Common myeloid progenitor, CD34-positive (primary cell): ENCODE measurements at regions of chr13 and their contacts with region 1.

Region 1: DNA sequence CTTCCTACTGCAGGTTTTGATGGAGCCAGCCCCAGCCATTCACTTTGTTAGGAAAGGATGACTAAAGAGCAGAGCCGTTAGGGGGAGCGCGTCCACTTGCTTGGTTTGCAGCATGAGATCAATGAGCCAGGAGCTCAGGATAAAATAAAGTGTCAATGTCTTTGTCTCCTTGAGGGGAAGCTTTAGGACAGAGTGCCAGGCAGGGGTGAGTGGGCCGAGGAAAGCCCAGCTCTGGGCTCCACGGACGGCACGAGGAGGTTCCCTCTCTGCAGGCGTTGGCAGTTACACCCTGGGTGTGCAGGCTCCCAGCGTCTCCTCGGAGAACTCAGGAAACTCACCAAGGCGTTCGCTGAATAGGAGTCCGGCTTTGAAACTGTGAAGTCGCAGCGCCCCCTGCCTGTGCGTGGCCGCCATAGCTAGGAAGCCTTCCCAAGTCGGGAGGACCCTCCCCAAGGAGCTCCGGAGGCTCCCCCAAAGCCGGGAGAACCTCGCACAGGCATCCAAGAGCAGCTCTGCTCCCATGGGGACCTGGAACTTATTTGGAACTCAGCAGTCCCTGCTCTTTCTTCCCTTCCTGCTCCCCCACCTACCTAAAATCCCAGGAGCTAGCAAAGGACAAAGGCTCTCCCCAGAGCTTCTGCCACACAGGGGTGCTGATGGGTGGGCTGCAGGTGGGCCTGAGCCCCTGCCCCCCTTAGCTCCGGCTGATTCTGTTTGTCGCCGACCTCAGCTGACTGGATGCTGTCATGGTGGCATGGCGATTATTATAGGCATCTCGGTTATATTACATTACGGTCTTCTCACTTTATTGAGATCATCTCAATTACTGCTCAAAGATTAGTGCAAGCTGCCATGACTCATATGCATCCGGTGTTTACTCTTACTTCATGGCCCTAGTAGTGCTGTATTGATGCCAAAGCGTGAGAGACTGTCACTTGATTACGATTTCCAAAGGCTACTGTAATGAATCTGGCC is 34.4 kb downstream of the GSX1 start:
- DNase-seq: peak; percentile 80 to 84 (median 83)
- H3K4me3 ChIP-seq: peak overlapping the region in 6 of 7 experiments; percentile 20 to 71 (median 46)
- H3K27ac ChIP-seq: no peak overlapping the region
- H3K4me1 ChIP-seq: peaks cover 0 to 13% (median 5%) of the 10 kb centered on the region in 4 experiments
- H3K27me3 ChIP-seq: peaks cover 8 to 78% (median 43%) of the 10 kb centered on the region in 5 experiments

Region 2: GRCh38 chr13:26985285-26985878 is 841.3 kb before region 1 on chr13:
- CTCF ChIA-PET with region 1: interaction called, 18 read pairs
- POLR2A ChIA-PET with region 1: interaction called, 4 read pairs
- DNase-seq: peak; percentile 81 to 91 (median 87)
- H3K4me3 ChIP-seq: no peak overlapping the region
- H3K27ac ChIP-seq: no peak overlapping the region
- H3K4me1 ChIP-seq: peaks cover 16 to 48% (median 31%) of the 10 kb centered on the region in 4 experiments
- H3K27me3 ChIP-seq: no peaks in the 10 kb centered on the region

Region 3: GRCh38 chr13:27374650-27375049 is 452.0 kb before region 1 on chr13:
- CTCF ChIA-PET with region 1: interaction called, 126 read pairs
- POLR2A ChIA-PET with region 1: no interaction called
- DNase-seq: peak; percentile 83 to 89 (median 85)
- H3K4me3 ChIP-seq: no peak overlapping the region
- H3K27ac ChIP-seq: no peak overlapping the region
- H3K4me1 ChIP-seq: peaks cover 0 to 1% (median 0%) of the 10 kb centered on the region in 4 experiments
- H3K27me3 ChIP-seq: peaks cover 0 to 15% (median 11%) of the 10 kb centered on the region in 5 experiments

Region 4: DNA sequence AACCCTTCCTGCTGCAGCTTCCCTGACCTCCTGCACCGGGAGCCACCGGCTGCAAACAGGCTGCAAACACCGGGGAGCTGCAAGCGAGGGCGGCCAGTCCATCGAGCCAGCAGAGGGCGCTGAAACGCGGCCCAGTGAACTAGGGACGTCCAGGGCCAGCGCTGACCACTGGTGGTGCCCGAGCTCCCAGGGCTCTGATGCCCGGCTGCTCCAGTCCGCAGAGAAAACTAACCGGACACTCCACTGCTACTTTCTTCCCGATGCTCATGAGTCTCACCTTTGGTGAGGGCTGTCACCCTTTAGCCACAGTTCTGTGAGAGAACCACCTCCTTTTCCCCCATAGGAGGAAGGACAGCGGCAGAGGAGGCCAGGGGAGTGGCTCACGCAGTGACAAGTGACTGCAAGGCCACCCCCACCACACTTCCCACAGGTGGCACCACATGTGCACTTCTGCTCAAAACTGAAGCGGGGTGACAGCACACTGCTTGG is 293.5 kb before region 1 on chr13:
- CTCF ChIA-PET with region 1: interaction called, 16 read pairs
- POLR2A ChIA-PET with region 1: no interaction called
- DNase-seq: peak; percentile 44 to 76 (median 67)
- H3K4me3 ChIP-seq: peak overlapping the region in 5 of 7 experiments; percentile 15 to 62 (median 43)
- H3K27ac ChIP-seq: no peak overlapping the region
- H3K4me1 ChIP-seq: peaks cover 0 to 9% (median 8%) of the 10 kb centered on the region in 4 experiments
- H3K27me3 ChIP-seq: peaks cover 0 to 2% (median 0%) of the 10 kb centered on the region in 5 experiments

Region 5: DNA sequence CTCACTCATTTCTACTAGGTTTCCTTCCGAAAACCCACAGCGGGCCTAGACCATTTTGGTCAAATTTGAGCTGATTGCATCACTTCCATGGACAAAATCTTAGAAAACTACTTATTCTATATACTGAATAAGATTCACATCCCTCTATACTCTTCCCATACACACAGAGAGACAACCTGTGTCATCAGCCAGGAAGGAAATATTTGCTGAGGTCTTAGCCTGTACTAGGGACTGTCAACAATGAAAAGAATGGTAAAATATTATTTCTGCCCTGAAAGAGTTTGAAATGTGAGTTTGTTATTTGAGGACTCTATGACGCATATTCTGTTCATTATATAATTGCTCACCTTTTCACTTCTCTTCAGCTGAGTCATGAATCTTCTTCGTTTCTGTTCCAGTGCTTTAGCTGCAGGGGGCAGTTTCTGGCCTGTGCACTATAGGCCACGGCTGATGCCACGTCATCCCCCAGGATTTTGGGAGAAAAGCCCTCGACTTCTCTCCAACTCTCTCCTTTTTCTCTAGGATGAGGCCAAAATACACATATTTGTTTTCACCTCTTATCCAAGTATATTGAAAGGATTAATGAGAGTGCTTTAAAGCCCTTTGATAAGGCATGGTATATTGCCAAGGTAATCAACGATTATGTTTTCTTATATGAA is 13.3 kb after region 1 on chr13:
- CTCF ChIA-PET with region 1: interaction called, 57 read pairs
- POLR2A ChIA-PET with region 1: interaction called, 5 read pairs
- DNase-seq: no peak
- H3K4me3 ChIP-seq: no peak overlapping the region
- H3K27ac ChIP-seq: no peak overlapping the region
- H3K4me1 ChIP-seq: no peaks in the 10 kb centered on the region
- H3K27me3 ChIP-seq: peaks cover 4 to 53% (median 10%) of the 10 kb centered on the region in 5 experiments

Region 6: DNA sequence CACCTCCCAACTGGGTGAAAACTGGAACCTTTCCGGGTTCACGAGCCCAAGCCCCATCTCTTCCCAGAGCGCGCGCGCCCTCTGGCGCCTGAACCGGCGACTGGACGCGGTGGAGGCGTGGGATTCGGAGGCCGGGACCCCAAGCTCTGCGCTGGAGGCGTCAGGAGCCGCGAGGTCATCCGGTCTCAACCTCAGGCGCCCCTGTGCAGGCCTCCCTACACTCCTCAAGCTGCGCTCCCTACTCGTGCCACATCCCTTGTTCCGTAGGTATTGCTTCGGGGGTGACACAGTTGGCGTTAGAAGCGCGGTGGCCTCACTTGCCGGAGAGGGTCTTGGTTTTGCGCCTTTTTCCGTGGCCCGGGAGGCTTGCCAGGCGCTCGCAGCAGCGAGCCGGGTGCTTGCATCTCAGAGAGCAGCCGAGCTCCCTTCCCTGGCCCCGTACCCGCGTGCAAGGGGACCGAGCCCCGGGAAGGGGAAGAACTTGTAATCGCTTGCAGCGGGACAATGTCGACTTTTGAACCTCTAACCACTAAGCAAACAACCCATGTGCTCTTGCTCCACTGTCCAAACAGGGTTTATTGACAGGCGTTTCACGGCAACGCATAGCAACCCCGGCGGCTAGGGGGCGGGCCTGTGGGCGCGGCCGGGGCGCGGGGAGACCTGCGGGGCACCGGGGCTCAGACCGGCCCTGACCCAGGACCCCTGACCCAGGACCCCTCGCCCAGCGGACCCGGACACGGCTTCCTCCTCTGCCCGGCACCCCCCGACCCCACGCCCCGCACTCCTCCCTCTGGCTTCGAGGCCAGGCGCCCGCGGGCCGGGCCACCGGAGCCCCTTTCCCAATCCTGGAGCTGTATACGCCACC is 133.9 kb after region 1 on chr13:
- CTCF ChIA-PET with region 1: interaction called, 65 read pairs
- POLR2A ChIA-PET with region 1: no interaction called
- DNase-seq: peak; percentile 50 to 83 (median 76)
- H3K4me3 ChIP-seq: peak overlapping the region in 5 of 7 experiments; percentile 8 to 64 (median 50)
- H3K27ac ChIP-seq: no peak overlapping the region
- H3K4me1 ChIP-seq: peaks cover 0 to 17% (median 14%) of the 10 kb centered on the region in 4 experiments
- H3K27me3 ChIP-seq: peaks cover 26 to 99% (median 64%) of the 10 kb centered on the region in 5 experiments

Region 7: DNA sequence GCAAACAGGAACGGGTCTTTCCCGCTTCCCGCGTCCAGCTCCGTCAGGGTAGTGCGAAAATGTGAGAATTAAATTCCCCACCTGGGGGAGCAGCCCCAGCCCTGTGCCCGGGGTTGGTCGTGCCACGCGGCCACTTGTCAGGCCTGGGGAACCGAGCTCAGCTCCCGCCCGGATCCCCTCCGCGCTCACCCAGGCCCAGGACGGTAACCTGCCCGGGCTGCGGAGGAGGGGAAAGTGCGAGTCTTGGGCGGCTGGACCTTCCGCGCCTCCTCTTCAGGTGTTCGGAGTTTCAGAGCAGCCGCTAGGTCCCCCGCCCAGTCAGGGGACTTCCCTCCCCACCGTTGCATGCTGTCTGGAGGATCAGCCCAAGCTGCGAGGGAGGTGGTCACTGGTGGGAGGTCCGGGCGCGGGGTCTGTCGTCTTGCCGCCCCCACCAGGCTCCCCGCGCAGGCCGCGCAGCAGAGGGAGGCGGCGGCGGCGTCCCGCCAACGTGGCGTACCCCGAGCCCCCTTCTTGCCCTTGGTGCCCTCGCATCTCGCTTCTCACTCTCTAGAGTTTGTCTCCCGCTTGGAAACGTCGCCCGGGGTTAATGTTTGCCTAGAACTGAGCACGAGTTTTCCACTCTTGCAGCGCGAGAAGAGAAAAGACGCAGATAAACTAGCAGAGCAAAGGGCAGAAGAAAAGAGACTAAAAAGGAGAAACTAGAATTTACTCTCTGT is 153.8 kb after region 1 on chr13:
- CTCF ChIA-PET with region 1: interaction called, 120 read pairs
- POLR2A ChIA-PET with region 1: no interaction called
- DNase-seq: no peak
- H3K4me3 ChIP-seq: no peak overlapping the region
- H3K27ac ChIP-seq: no peak overlapping the region
- H3K4me1 ChIP-seq: peaks cover 0 to 33% (median 18%) of the 10 kb centered on the region in 4 experiments
- H3K27me3 ChIP-seq: peaks cover 7 to 82% (median 55%) of the 10 kb centered on the region in 5 experiments

Region 8: DNA sequence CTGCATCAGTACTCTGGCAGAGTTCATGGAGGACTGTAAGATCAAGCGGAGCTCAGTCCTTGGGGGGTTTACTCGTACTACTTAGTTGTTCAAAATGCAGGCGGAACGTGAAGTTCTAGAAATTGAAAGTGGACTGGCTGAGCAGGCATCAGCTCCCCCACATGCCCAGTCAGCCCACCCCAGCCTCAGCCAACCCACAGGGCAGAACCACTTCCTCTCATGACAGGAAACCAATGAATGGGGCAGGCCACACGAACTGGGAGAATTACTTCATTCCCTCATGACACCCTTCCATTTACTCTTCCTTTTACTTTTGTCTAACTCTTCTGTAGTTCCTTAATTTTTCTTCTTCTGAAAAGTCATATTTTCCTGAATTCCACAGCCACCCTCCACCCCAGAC is 596.3 kb after region 1 on chr13:
- CTCF ChIA-PET with region 1: no interaction called
- POLR2A ChIA-PET with region 1: no interaction called
- DNase-seq: peak; percentile 91 to 94 (median 92)
- H3K4me3 ChIP-seq: peak overlapping the region in 4 of 7 experiments; percentile 43 to 67 (median 52)
- H3K27ac ChIP-seq: peak overlapping the region in 1 of 2 experiments; percentile 16
- H3K4me1 ChIP-seq: peaks cover 17 to 35% (median 27%) of the 10 kb centered on the region in 4 experiments
- H3K27me3 ChIP-seq: no peaks in the 10 kb centered on the region